SK-N-SH (cell line): ENCODE measurements at regions of chr17 and their contacts with region 1.

Region 1: GRCh38 chr17:43946069-43946696 is 3.9 kb upstream of the PPY start:
- DNase-seq: no peak
- H3K4me3 ChIP-seq: no peak overlapping the region
- H3K27ac ChIP-seq: no peak overlapping the region
- H3K4me1 ChIP-seq: peaks cover 0 to 2% of the 10 kb centered on the region in 2 experiments; a peak in 1 of 4 replicates
- H3K27me3 ChIP-seq: no peaks in the 10 kb centered on the region
- CTCF ChIP-seq: no peak
- EP300 ChIP-seq: no peak
- RAD21 ChIP-seq: no peak

Region 2: GRCh38 chr17:43755389-43755875 is 190.8 kb before region 1 on chr17:
- CTCF ChIA-PET with region 1: no interaction called
- POLR2A ChIA-PET with region 1: no interaction called
- DNase-seq: no peak
- H3K4me3 ChIP-seq: no peak overlapping the region
- H3K27ac ChIP-seq: no peak overlapping the region
- H3K4me1 ChIP-seq: peaks cover 0 to 6% of the 10 kb centered on the region in 2 experiments; a peak in 1 of 4 replicates
- H3K27me3 ChIP-seq: no peaks in the 10 kb centered on the region
- CTCF ChIP-seq: no peak
- EP300 ChIP-seq: no peak
- RAD21 ChIP-seq: no peak

Region 3: GRCh38 chr17:43917348-43918018 is 28.7 kb before region 1 on chr17:
- CTCF ChIA-PET with region 1: interaction called, 80 read pairs
- POLR2A ChIA-PET with region 1: no interaction called
- DNase-seq: no peak
- H3K4me3 ChIP-seq: no peak overlapping the region
- H3K27ac ChIP-seq: no peak overlapping the region
- H3K4me1 ChIP-seq: peaks cover 0 to 7% of the 10 kb centered on the region in 2 experiments; a peak in 1 of 4 replicates
- H3K27me3 ChIP-seq: no peaks in the 10 kb centered on the region; the same call in 1 of the 2 replicates
- CTCF ChIP-seq: no peak
- EP300 ChIP-seq: no peak
- RAD21 ChIP-seq: no peak

Region 4: GRCh38 chr17:43958953-43959352 is 12.8 kb after region 1 on chr17:
- CTCF ChIA-PET with region 1: interaction called, 23 read pairs
- POLR2A ChIA-PET with region 1: no interaction called
- DNase-seq: no peak
- H3K4me3 ChIP-seq: no peak overlapping the region
- H3K27ac ChIP-seq: no peak overlapping the region
- H3K4me1 ChIP-seq: no peaks in the 10 kb centered on the region
- H3K27me3 ChIP-seq: no peaks in the 10 kb centered on the region; the same call in 1 of the 2 replicates
- CTCF ChIP-seq: no peak
- EP300 ChIP-seq: no peak
- RAD21 ChIP-seq: no peak

Region 5: DNA sequence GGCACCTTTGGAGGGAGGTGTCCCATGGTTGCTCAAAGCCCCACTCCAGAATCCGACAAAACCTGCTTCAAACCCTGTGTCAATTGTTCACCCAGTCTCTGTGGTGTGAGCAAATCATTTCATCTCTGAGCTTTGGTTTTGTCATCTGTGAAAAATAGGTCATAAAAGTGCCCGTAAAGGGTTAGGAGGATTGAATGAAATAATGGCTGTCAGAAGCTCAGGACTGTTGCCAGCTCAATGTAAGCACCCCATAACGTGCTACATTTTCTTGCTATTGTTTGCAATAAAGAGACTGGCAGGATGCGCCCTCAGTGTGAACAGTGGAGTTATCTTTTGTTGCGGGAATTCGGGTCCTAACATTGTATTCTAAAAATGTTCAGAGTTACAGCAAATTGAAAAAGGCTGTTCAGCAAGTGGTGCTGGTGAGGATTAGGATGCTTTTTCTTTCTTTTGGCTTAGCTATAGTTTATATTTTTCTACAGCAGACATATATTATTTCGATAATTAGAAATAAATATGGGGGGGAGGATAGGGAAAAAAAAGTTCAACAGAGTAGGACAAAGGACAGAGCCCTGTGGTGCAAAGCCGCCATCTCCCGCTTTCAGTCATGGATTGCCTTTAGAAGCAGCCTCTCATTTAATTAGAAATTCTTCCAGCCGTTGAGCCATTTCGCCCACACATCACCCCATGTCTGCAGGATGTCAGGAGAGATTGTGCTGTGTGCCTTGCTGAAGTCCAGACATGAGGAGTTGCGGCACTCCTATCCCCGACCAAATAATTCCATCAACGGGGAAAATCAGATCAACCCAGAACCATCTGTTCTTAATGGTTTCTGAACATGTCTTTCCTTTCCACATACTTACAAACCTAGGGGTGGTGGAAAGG is 28.4 kb after region 1 on chr17:
- CTCF ChIA-PET with region 1: interaction called, 25 read pairs
- POLR2A ChIA-PET with region 1: no interaction called
- DNase-seq: peak; percentile 82
- H3K4me3 ChIP-seq: no peak overlapping the region
- H3K27ac ChIP-seq: peak overlapping the region in 1 of 2 experiments; percentile 94; a peak in 2 of 4 replicates
- H3K4me1 ChIP-seq: peaks cover 0 to 21% of the 10 kb centered on the region in 2 experiments; a peak in 2 of 4 replicates
- H3K27me3 ChIP-seq: peaks cover 6% of the 10 kb centered on the region; the same call in 1 of the 2 replicates
- CTCF ChIP-seq: no peak
- EP300 ChIP-seq: peak in 1 of 2 experiments; percentile 95; a peak in 2 of 4 replicates
- RAD21 ChIP-seq: peak; percentile 27

Region 6: DNA sequence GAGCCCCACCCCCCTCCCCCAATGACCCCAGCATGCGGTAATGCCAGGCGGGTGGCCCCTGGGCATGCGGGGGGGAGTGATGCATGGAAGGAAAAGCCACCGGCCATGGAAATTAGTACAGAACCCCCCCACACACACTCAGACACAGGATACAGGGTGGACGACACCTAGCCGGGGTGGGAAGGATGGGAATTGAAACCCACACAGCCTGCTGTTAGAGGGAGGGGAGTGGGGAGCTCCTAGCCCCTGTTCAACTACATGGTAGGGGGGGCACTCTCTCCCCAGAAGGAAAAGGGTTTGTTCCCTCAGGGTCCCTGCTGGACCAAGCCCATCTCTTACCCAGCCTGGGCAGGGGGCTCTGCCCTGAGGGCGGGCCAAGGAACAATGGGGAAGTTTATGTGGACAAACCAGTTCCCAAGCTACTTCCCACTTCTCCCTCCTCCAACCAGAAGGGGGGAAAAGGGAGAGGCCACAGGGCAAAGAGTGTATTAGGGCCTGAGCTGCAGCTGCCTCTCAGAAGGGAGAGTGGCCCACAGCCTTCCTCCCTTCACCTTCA is 245.8 kb after region 1 on chr17:
- CTCF ChIA-PET with region 1: no interaction called
- POLR2A ChIA-PET with region 1: no interaction called
- DNase-seq: no peak
- H3K4me3 ChIP-seq: no peak overlapping the region
- H3K27ac ChIP-seq: peak overlapping the region in 1 of 2 experiments; percentile 43; a peak in 1 of 4 replicates
- H3K4me1 ChIP-seq: peaks cover 0 to 14% of the 10 kb centered on the region in 2 experiments; a peak in 2 of 4 replicates
- H3K27me3 ChIP-seq: no peaks in the 10 kb centered on the region
- CTCF ChIP-seq: no peak
- EP300 ChIP-seq: no peak
- RAD21 ChIP-seq: no peak